ENCODE measurements at regions of chr15 and their contacts with region 1.

Region 1: GRCh38 chr15:41230650-41231533 is at the starts of genes CHP1 and EXD1:
- DNase-seq: peak; percentile 86 to 96 (median 90)
- ATAC-seq: peak; percentile 96
- H3K4me3 ChIP-seq: peak within 1 kb of the TSS; percentile 92
- H3K4me3 Mint-ChIP-seq: peak within 1 kb of the TSS; percentile 85 to 94 (median 91)
- H3K27ac ChIP-seq: peak within 1 kb of the TSS; percentile 82
- H3K27ac Mint-ChIP-seq: peak within 1 kb of the TSS; percentile 81 to 94 (median 92)
- H3K4me1 ChIP-seq: peaks cover 10 to 13% of the 10 kb centered on the region in 2 donors
- H3K4me1 Mint-ChIP-seq: peaks cover 17 to 36% (median 25%) of the 10 kb centered on the region in 7 donors
- H3K27me3 ChIP-seq: no peaks in the 10 kb centered on the region
- H3K27me3 Mint-ChIP-seq: peaks cover 0 to 11% (median 0%) of the 10 kb centered on the region in 5 donors
- total RNA-seq, gene CHP1: 20.2 to 70.6 (median 24.7) TPM
- total RNA-seq, gene EXD1: not detected

Region 2: GRCh38 chr15:40595773-40596172 is 635.1 kb before region 1 on chr15:
- CTCF ChIA-PET with region 1: no interaction called
- POLR2A ChIA-PET with region 1: no interaction called
- intact Hi-C with region 1: no loop called
- DNase-seq: no peak
- ATAC-seq: no peak
- H3K4me3 ChIP-seq: no peak overlapping the region
- H3K4me3 Mint-ChIP-seq: peak overlapping the region in 1 of 10 donors; percentile 56
- H3K27ac ChIP-seq: no peak overlapping the region
- H3K27ac Mint-ChIP-seq: no peak overlapping the region
- H3K4me1 ChIP-seq: peaks cover 8 to 11% of the 10 kb centered on the region in 2 donors
- H3K4me1 Mint-ChIP-seq: peaks cover 7 to 34% (median 17%) of the 10 kb centered on the region in 7 donors
- H3K27me3 ChIP-seq: no peaks in the 10 kb centered on the region
- H3K27me3 Mint-ChIP-seq: peaks cover 0 to 12% (median 6%) of the 10 kb centered on the region in 5 donors

Region 3: GRCh38 chr15:40754883-40755811 is 475.7 kb before region 1 on chr15 and contains the start of gene RMDN3:
- CTCF ChIA-PET with region 1: no interaction called
- POLR2A ChIA-PET with region 1: no interaction called
- intact Hi-C with region 1: loop called in 1 of 2 experiments (anchors 1 kb)
- DNase-seq: peak; percentile 89 to 97 (median 92)
- ATAC-seq: peak; percentile 99
- H3K4me3 ChIP-seq: peak within 1 kb of the TSS; percentile 94
- H3K4me3 Mint-ChIP-seq: peak within 1 kb of the TSS; percentile 90 to 98 (median 94)
- H3K27ac ChIP-seq: peak within 1 kb of the TSS; percentile 95
- H3K27ac Mint-ChIP-seq: peak within 1 kb of the TSS; percentile 89 to 99 (median 95)
- H3K4me1 ChIP-seq: peaks cover 7 to 10% of the 10 kb centered on the region in 2 donors
- H3K4me1 Mint-ChIP-seq: peaks cover 16 to 37% (median 27%) of the 10 kb centered on the region in 7 donors
- H3K27me3 ChIP-seq: no peaks in the 10 kb centered on the region
- H3K27me3 Mint-ChIP-seq: no peaks in the 10 kb centered on the region
- total RNA-seq, gene RMDN3: 19.5 to 44.0 (median 31.9) TPM

Region 4: DNA sequence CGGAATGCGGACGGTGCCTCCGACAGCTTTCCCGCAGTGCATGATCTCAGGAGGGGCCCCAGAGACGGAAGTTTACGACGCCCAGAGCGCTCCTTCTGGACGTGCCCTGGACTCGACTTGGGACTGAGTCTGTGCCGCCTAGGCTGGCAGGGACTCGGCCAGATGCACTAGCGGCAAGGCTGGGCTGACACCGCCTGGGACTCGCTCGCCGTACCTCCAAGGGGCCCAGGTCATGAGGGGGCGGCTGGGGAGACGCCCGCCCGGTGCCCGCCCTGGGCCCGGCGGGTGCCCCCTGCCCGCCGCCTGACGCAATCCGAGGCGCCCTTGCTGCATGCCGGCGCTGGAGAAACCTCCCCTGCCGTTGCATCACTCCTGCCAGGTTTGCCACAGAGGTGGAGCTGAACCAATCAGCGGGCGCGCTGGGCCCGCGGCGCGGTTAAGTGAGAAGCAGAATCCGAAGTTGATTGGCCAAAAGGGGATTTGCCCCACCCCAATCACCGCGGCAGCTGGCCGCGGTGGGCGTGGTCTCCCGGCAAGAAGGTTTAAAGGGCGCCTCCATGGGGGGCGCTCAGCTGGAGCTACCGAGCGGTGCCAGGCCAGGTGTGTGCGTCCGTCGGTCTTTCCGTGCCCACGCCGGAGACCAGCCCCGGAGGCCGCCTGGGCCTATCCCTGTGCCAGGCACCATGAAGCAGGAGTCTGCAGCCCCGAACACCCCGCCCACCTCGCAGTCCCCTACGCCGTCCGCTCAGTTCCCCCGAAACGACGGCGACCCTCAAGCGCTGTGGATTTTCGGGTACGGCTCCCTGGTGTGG is 277.8 kb before region 1 on chr15 and contains the start of gene CHAC1:
- CTCF ChIA-PET with region 1: no interaction called
- POLR2A ChIA-PET with region 1: interaction called, 3 read pairs
- intact Hi-C with region 1: loop called (anchors 1 to 5 kb)
- DNase-seq: peak; percentile 79 to 97 (median 94)
- ATAC-seq: peak; percentile 98
- H3K4me3 ChIP-seq: peak within 1 kb of the TSS; percentile 68
- H3K4me3 Mint-ChIP-seq: peak within 1 kb of the TSS; percentile 87 to 96 (median 94)
- H3K27ac ChIP-seq: peak within 1 kb of the TSS; percentile 74
- H3K27ac Mint-ChIP-seq: peak within 1 kb of the TSS in 8 of 9 donors; percentile 76 to 95 (median 88)
- H3K4me1 ChIP-seq: peaks cover 10 to 14% of the 10 kb centered on the region in 2 donors
- H3K4me1 Mint-ChIP-seq: peaks cover 7 to 34% (median 19%) of the 10 kb centered on the region in 7 donors
- H3K27me3 ChIP-seq: no peaks in the 10 kb centered on the region
- H3K27me3 Mint-ChIP-seq: peaks cover 0 to 4% (median 0%) of the 10 kb centered on the region in 5 donors
- total RNA-seq, gene CHAC1: 0.24 to 5.7 (median 1.1) TPM

Region 5: GRCh38 chr15:41401904-41402267 is 171.0 kb after region 1 on chr15:
- CTCF ChIA-PET with region 1: no interaction called
- POLR2A ChIA-PET with region 1: interaction called, 4 read pairs
- intact Hi-C with region 1: loop called (anchors 2 to 5 kb)
- DNase-seq: no peak
- ATAC-seq: no peak
- H3K4me3 ChIP-seq: peak overlapping the region; percentile 92
- H3K4me3 Mint-ChIP-seq: peak overlapping the region; percentile 87 to 97 (median 96)
- H3K27ac ChIP-seq: peak overlapping the region; percentile 81
- H3K27ac Mint-ChIP-seq: peak overlapping the region; percentile 89 to 96 (median 94)
- H3K4me1 ChIP-seq: peaks cover 0 to 14% of the 10 kb centered on the region in 2 donors
- H3K4me1 Mint-ChIP-seq: peaks cover 0 to 32% (median 24%) of the 10 kb centered on the region in 7 donors
- H3K27me3 ChIP-seq: no peaks in the 10 kb centered on the region
- H3K27me3 Mint-ChIP-seq: no peaks in the 10 kb centered on the region

Region 6: GRCh38 chr15:41772684-41773331 is 541.9 kb after region 1 on chr15:
- CTCF ChIA-PET with region 1: no interaction called
- POLR2A ChIA-PET with region 1: no interaction called
- intact Hi-C with region 1: no loop called
- DNase-seq: peak in 8 of 9 donors; percentile 39 to 78 (median 70)
- ATAC-seq: peak; percentile 13
- H3K4me3 ChIP-seq: no peak overlapping the region
- H3K4me3 Mint-ChIP-seq: peak overlapping the region in 8 of 10 donors; percentile 32 to 97 (median 94)
- H3K27ac ChIP-seq: peak overlapping the region; percentile 73
- H3K27ac Mint-ChIP-seq: peak overlapping the region in 8 of 9 donors; percentile 88 to 97 (median 94)
- H3K4me1 ChIP-seq: peaks cover 28 to 36% of the 10 kb centered on the region in 2 donors
- H3K4me1 Mint-ChIP-seq: peaks cover 27 to 51% (median 46%) of the 10 kb centered on the region in 7 donors
- H3K27me3 ChIP-seq: no peaks in the 10 kb centered on the region
- H3K27me3 Mint-ChIP-seq: no peaks in the 10 kb centered on the region

Region 7: GRCh38 chr15:41972253-41973242 is 741.7 kb after region 1 on chr15 and contains the start of gene EHD4:
- CTCF ChIA-PET with region 1: no interaction called
- POLR2A ChIA-PET with region 1: no interaction called
- intact Hi-C with region 1: loop called in 1 of 2 experiments (anchors 10 kb)
- DNase-seq: peak; percentile 85 to 96 (median 94)
- ATAC-seq: peak; percentile 91
- H3K4me3 ChIP-seq: peak within 1 kb of the TSS; percentile 87
- H3K4me3 Mint-ChIP-seq: peak within 1 kb of the TSS; percentile 85 to 97 (median 94)
- H3K27ac ChIP-seq: peak within 1 kb of the TSS; percentile 83
- H3K27ac Mint-ChIP-seq: peak within 1 kb of the TSS; percentile 90 to 97 (median 95)
- H3K4me1 ChIP-seq: peaks cover 19 to 23% of the 10 kb centered on the region in 2 donors
- H3K4me1 Mint-ChIP-seq: peaks cover 31 to 55% (median 45%) of the 10 kb centered on the region in 7 donors
- H3K27me3 ChIP-seq: no peaks in the 10 kb centered on the region
- H3K27me3 Mint-ChIP-seq: peaks cover 0 to 17% (median 7%) of the 10 kb centered on the region in 5 donors
- total RNA-seq, gene EHD4: 10.4 to 48.3 (median 23.7) TPM

Region 8: GRCh38 chr15:42920519-42921227 is 1689.8 kb after region 1 on chr15 and contains the start of gene TTBK2:
- CTCF ChIA-PET with region 1: no interaction called
- POLR2A ChIA-PET with region 1: no interaction called
- intact Hi-C with region 1: loop called in 1 of 2 experiments (anchors 2 kb)
- DNase-seq: peak; percentile 93 to 98 (median 97)
- ATAC-seq: peak; percentile 98
- H3K4me3 ChIP-seq: peak within 1 kb of the TSS; percentile 89
- H3K4me3 Mint-ChIP-seq: peak within 1 kb of the TSS; percentile 93 to 100 (median 97)
- H3K27ac ChIP-seq: peak within 1 kb of the TSS; percentile 71
- H3K27ac Mint-ChIP-seq: peak within 1 kb of the TSS; percentile 88 to 97 (median 95)
- H3K4me1 ChIP-seq: peaks cover 4 to 5% of the 10 kb centered on the region in 2 donors
- H3K4me1 Mint-ChIP-seq: peaks cover 14 to 40% (median 29%) of the 10 kb centered on the region in 7 donors
- H3K27me3 ChIP-seq: no peaks in the 10 kb centered on the region
- H3K27me3 Mint-ChIP-seq: peaks cover 0 to 3% (median 0%) of the 10 kb centered on the region in 5 donors
- total RNA-seq, gene TTBK2: 15.7 to 30.5 (median 28.8) TPM